Activated CD4-positive, alpha-beta T cell treated with anti-CD3 and anti-CD28 coated beads, Interleukin-2, amount 10 ng/mL, durations not matched to agents 24 days and 14 days (primary cell): ENCODE measurements at regions of chr13 and their contacts with region 1.

Region 1: DNA sequence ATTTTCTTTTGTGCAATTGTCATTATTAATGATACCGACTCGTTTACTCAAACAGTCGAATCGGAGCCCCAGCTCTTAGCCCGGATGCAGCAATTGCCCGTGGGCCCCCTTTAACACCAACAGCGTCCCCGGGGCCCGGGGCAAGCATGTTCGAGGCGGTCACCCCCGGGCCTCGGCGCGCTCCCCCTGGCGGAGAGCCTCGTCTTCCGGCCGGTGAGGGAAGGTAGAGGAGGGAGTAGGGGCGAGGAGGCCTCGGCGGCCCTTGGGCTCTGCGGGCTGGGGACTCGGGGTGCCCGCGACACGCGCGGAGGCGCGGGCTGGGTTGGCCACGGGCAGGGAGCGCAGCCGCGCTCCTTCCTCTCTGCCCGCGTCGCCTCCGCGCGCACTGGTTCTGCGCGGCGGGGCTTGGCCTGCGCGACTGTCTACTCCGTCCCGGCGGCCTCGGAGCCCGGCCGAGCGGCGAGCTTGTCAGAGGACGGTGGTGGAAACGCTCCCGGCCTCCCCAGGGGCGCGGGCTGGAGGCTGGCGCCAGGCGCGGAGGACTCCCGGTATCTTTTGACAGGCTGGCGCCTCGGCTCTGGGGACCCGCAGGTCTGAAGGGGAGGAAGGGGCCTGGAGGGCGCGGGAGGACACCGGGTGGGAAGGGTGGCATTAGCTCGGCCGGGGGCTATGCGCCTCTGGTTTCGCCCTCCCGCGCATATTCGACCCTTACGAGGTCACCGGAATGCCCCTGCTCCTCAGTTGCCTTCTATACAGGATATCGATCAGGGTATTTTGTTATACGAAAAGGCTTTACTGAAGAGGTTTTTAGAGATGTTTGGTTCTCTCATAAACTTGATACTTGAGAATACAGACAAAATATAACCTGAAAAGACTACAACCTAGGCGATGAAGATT is 1.5 kb downstream of the BIVM start:
- DNase-seq: peak; percentile 97
- H3K4me3 Mint-ChIP-seq: peak overlapping the region; percentile 98
- H3K27ac Mint-ChIP-seq: peak overlapping the region; percentile 89
- H3K4me1 Mint-ChIP-seq: peaks cover 31% of the 10 kb centered on the region
- H3K27me3 Mint-ChIP-seq: no peaks in the 10 kb centered on the region

Region 2: GRCh38 chr13:102596147-102597028 is 204.0 kb before region 1 on chr13 and contains the start of gene TPP2:
- intact Hi-C with region 1: loop called (anchors 1 kb)
- DNase-seq: peak; percentile 100
- H3K4me3 Mint-ChIP-seq: peak within 1 kb of the TSS; percentile 97
- H3K27ac Mint-ChIP-seq: peak within 1 kb of the TSS; percentile 99
- H3K4me1 Mint-ChIP-seq: peaks cover 48% of the 10 kb centered on the region
- H3K27me3 Mint-ChIP-seq: no peaks in the 10 kb centered on the region
- total RNA-seq, gene TPP2: 77.3 and 80.0 TPM in 2 replicates

Region 3: GRCh38 chr13:102724923-102725322 is 75.5 kb before region 1 on chr13:
- intact Hi-C with region 1: loop called (anchors 1 kb)
- DNase-seq: peak; percentile 65
- H3K4me3 Mint-ChIP-seq: no peak overlapping the region
- H3K27ac Mint-ChIP-seq: no peak overlapping the region
- H3K4me1 Mint-ChIP-seq: peaks cover 3% of the 10 kb centered on the region
- H3K27me3 Mint-ChIP-seq: peaks cover 30% of the 10 kb centered on the region

Region 4: DNA sequence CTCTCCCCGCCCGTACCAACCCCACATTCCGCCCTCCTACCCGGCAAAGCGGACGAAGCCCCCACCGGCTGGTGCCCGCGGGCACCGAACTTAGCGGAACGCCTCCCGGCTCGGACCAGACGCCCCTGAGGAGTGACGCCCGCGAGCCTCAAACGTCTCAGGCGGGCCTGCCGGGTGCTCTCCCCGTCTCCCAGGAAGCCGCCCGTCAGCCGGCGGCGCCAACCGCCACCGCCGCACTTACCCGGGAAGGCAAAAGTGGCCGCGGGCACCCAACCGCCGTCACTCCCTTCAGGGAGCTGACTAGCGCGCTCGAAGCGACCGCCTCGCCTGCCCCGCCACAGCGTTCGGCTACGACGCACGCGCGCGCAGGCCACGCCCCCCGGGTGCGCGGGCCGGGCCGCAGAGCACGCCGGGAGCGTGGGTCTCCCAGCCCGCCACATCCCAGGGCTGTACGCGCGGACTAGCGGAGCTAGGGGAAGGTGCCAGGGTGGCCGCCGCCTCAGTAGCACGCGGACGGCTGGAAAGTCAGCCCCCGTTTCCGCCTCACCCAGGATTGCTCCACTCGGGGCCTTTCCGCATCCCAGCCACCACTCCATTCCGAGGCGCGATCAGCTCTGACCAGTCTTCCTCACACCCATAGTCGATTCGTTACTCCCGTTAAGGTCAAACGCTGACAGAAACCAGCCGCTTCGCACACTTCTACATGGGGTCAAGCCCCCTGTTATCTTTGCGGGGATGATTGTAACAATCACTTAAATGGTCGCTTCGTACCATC is 26.8 kb before region 1 on chr13 and contains the start of gene TEX30:
- intact Hi-C with region 1: loop called (anchors 1 kb)
- DNase-seq: peak; percentile 98
- H3K4me3 Mint-ChIP-seq: peak within 1 kb of the TSS; percentile 87
- H3K27ac Mint-ChIP-seq: peak within 1 kb of the TSS; percentile 93
- H3K4me1 Mint-ChIP-seq: peaks cover 49% of the 10 kb centered on the region
- H3K27me3 Mint-ChIP-seq: no peaks in the 10 kb centered on the region
- total RNA-seq, gene TEX30: 55.4 and 65.6 TPM in 2 replicates

Region 5: DNA sequence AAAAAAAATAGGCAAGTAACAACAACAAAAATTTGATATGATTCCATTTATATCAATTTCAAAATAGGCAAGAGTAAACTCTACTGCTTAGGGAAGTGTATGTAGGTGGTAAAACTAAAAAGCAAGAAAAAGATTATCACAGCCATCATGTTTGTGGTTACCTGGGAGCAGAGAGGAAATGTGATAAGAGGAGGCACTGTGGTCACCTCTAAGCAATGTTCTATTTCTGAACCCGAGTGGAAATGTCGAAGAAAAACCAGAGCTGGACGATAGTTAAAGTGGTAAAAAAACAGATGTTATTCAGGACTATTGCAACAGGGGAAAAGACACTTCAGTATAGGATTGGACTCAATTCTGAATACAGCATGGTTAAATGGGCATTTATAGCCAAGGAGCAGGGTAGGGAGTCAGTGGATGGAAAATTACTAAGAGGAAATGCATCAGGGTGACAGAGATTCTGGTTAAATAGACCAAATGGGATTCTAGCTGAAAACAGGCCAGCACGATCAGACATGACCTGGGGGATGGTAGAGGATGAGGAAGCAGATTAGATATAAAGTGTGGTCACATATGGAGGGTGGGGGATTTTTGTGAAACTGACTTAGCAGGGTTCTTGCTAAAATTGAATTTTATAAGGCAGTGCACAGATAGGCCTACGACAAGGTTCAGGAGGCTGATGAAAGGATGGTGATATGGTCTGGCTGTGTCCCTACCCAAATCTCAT is 20.8 kb before region 1 on chr13:
- intact Hi-C with region 1: loop called (anchors 1 kb)
- DNase-seq: peak; percentile 82
- H3K4me3 Mint-ChIP-seq: peak overlapping the region; percentile 53
- H3K27ac Mint-ChIP-seq: peak overlapping the region; percentile 92
- H3K4me1 Mint-ChIP-seq: peaks cover 29% of the 10 kb centered on the region
- H3K27me3 Mint-ChIP-seq: no peaks in the 10 kb centered on the region

Region 6: DNA sequence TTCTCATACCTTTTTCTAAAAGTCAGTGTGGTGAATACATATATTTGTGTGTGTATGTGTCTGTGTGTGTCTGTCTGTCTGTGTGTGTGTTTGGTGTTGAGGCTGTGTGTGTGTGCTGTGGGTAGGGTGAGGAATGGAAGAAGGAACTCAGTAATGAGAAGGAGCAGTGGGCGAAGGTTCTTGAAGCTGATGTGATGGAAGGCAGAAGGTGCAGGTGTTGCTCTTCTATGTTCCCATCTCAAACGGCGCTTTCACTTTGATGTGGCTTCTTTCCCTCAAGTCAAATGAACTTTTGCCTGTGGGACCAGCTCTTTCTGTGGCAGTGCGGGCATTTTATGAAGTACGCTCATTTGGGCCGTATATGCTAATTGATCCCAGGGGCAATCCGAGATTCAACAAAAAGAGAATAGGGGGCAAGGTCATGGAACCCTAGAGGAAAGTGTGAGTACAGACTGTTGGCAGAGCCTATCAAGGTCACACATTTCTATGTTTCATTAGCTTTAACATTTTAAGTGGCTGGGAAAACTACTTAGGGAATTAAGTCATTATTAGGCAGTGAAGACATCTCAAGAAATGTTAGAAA is 13.7 kb after region 1 on chr13:
- intact Hi-C with region 1: loop called (anchors 2 kb)
- DNase-seq: no peak
- H3K4me3 Mint-ChIP-seq: peak overlapping the region; percentile 3
- H3K27ac Mint-ChIP-seq: peak overlapping the region; percentile 55
- H3K4me1 Mint-ChIP-seq: peaks cover 18% of the 10 kb centered on the region
- H3K27me3 Mint-ChIP-seq: no peaks in the 10 kb centered on the region